ENCODE measurements at regions of chr16 and their contacts with region 1.

Region 1: GRCh38 chr16:62177351-62178203 is 141.3 kb upstream of the CDH8 start:
- DNase-seq: no peak
- ATAC-seq: no peak
- H3K4me3 ChIP-seq: no peak overlapping the region
- H3K27ac ChIP-seq: no peak overlapping the region
- H3K4me1 ChIP-seq: no peaks in the 10 kb centered on the region
- H3K27me3 ChIP-seq: no peaks in the 10 kb centered on the region
- CTCF ChIP-seq: no peak
- POLR2A ChIP-seq: no peak
- RAD21 ChIP-seq: no peak

Region 2: GRCh38 chr16:62194828-62195227 is 17.3 kb after region 1 on chr16:
- CTCF ChIA-PET with region 1: no interaction called
- POLR2A ChIA-PET with region 1: no interaction called
- RAD21 ChIA-PET with region 1: no interaction called
- intact Hi-C with region 1: loop called (anchors 1 kb)
- DNase-seq: no peak
- ATAC-seq: no peak
- H3K4me3 ChIP-seq: no peak overlapping the region
- H3K27ac ChIP-seq: no peak overlapping the region
- H3K4me1 ChIP-seq: no peaks in the 10 kb centered on the region
- H3K27me3 ChIP-seq: no peaks in the 10 kb centered on the region
- CTCF ChIP-seq: no peak
- POLR2A ChIP-seq: no peak
- RAD21 ChIP-seq: no peak